A673 (cell line): ENCODE measurements at regions of chr16 and their contacts with region 1.

Region 1: GRCh38 chr16:69396187-69397061 is 10.6 kb upstream of the TERF2 start:
- DNase-seq: peak; percentile 93
- H3K4me3 ChIP-seq: peak overlapping the region; percentile 2
- H3K27ac ChIP-seq: peak overlapping the region; percentile 91
- H3K4me1 ChIP-seq: peaks cover 33% of the 10 kb centered on the region
- H3K27me3 ChIP-seq: no peaks in the 10 kb centered on the region
- CTCF ChIP-seq: peak; percentile 71

Region 2: GRCh38 chr16:69465083-69465721 is 68.8 kb after region 1 on chr16:
- CTCF ChIA-PET with region 1: interaction called, 4 read pairs
- POLR2A ChIA-PET with region 1: no interaction called
- intact Hi-C with region 1: loop called (anchors 5 kb)
- DNase-seq: no peak
- H3K4me3 ChIP-seq: no peak overlapping the region
- H3K27ac ChIP-seq: no peak overlapping the region
- H3K4me1 ChIP-seq: peaks cover 28% of the 10 kb centered on the region
- H3K27me3 ChIP-seq: no peaks in the 10 kb centered on the region
- CTCF ChIP-seq: no peak

Region 3: DNA sequence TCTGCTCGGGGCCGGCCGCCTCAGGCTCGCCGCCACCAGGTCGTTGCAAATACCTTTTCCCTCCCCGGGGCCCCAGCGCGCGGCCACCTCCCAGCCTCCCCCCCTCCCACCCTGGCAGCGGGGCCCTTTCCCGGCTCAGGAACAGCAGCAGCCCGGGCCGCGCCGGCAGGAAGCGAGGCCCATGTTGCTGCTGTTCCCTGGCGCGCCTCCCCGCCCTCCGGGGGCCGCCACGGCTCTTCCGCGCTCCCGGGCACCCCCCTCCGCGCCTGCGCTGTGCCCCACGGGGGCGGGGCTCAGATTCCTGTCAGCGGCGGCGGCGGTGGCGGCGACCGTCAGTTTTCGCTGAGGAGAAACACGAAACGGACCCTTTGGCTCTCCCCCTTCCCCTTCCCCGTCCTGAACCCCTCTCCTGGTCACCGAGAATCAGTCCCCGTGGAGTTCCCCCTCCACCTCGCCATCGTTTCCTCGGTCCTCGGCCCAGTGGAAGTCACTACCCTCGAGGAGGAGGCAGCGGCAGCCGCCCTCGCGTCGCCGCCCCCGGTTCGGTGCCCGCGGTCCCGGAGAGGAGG is 169.3 kb after region 1 on chr16 and contains the start of gene NFAT5:
- CTCF ChIA-PET with region 1: no interaction called
- POLR2A ChIA-PET with region 1: no interaction called
- intact Hi-C with region 1: loop called (anchors 2 kb)
- DNase-seq: peak; percentile 92
- H3K4me3 ChIP-seq: peak within 1 kb of the TSS; percentile 98
- H3K27ac ChIP-seq: peak within 1 kb of the TSS; percentile 86
- H3K4me1 ChIP-seq: peaks cover 38% of the 10 kb centered on the region
- H3K27me3 ChIP-seq: no peaks in the 10 kb centered on the region
- CTCF ChIP-seq: no peak
- total RNA-seq, gene NFAT5: 32.0 and 34.8 TPM in 2 replicates

Region 4: DNA sequence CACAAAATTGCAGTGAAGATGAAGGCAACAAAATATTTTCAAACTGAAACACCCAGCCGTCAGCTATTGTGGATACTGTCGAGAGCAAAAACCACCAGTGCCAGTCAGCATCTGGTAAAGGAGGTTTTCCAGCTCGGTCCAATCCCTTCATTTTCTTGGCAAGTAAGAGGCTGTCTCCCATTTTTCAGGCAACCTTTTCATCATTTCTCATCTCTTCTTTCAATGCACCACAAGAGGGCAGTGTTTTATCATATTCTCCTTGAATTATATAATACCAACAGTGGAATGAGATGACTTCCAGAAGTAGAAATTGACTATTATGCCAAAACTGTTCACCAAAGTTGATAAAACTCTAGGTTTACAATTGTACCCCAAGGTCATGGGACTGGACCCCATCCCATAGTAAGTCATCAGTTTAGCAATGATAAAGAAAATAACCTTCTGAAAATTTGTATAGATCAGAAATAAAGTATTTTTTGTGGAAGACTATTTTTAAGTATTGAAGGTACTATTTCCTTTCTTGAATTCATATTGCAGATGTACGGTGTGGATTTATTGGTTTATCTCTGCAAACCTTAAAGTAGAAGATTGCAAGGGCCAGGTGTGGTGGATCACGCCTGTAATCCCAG is 313.1 kb after region 1 on chr16:
- CTCF ChIA-PET with region 1: no interaction called
- POLR2A ChIA-PET with region 1: no interaction called
- intact Hi-C with region 1: loop called (anchors 5 kb)
- DNase-seq: peak; percentile 81
- H3K4me3 ChIP-seq: no peak overlapping the region
- H3K27ac ChIP-seq: no peak overlapping the region
- H3K4me1 ChIP-seq: no peaks in the 10 kb centered on the region
- H3K27me3 ChIP-seq: no peaks in the 10 kb centered on the region
- CTCF ChIP-seq: peak; percentile 73

Region 5: GRCh38 chr16:69754469-69755310 is 358.3 kb after region 1 on chr16 and contains the start of gene NOB1:
- CTCF ChIA-PET with region 1: interaction called, 13 read pairs
- POLR2A ChIA-PET with region 1: no interaction called
- intact Hi-C with region 1: loop called (anchors 1 kb)
- DNase-seq: peak; percentile 97
- H3K4me3 ChIP-seq: peak within 1 kb of the TSS; percentile 85
- H3K27ac ChIP-seq: peak within 1 kb of the TSS; percentile 79
- H3K4me1 ChIP-seq: peaks cover 7% of the 10 kb centered on the region
- H3K27me3 ChIP-seq: no peaks in the 10 kb centered on the region
- CTCF ChIP-seq: peak; percentile 98
- total RNA-seq, gene NOB1: 78.1 and 93.3 TPM in 2 replicates

Region 6: DNA sequence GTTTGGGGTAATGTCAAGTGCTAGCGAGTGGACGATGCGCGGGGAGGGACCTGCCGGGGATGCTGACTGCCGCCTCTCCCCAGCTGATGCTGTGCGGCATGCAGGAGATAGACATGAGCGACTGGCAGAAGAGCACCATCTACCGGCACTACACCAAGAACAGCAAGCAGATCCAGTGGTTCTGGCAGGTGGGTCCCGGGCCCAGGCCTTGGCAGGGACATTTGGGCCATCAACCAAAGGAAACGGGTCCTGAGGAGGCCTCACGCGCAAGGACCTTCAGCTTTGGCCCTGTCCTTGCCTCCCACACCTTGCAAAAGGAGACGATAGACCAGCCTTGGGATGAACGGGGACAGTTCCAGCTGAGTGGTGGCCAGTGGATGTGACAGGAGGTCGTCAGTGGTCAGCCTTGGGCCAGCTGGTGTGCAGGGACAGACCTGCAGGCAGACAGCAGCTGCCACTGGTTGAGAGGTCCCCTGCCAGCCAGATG is 541.1 kb after region 1 on chr16:
- CTCF ChIA-PET with region 1: no interaction called
- POLR2A ChIA-PET with region 1: no interaction called
- intact Hi-C with region 1: loop called (anchors 5 kb)
- DNase-seq: peak; percentile 24
- H3K4me3 ChIP-seq: no peak overlapping the region
- H3K27ac ChIP-seq: no peak overlapping the region
- H3K4me1 ChIP-seq: no peaks in the 10 kb centered on the region
- H3K27me3 ChIP-seq: no peaks in the 10 kb centered on the region
- CTCF ChIP-seq: peak; percentile 47